ENCODE measurements at regions of chr2 and their contacts with region 1.

Region 1: GRCh38 chr2:236180831-236181453 is 12.8 kb upstream of the GBX2 start:
- H3K4me3 Mint-ChIP-seq: no peak overlapping the region
- H3K27ac Mint-ChIP-seq: no peak overlapping the region
- H3K4me1 Mint-ChIP-seq: peaks cover 8% of the 10 kb centered on the region
- H3K27me3 Mint-ChIP-seq: peaks cover 68% of the 10 kb centered on the region

Region 2: DNA sequence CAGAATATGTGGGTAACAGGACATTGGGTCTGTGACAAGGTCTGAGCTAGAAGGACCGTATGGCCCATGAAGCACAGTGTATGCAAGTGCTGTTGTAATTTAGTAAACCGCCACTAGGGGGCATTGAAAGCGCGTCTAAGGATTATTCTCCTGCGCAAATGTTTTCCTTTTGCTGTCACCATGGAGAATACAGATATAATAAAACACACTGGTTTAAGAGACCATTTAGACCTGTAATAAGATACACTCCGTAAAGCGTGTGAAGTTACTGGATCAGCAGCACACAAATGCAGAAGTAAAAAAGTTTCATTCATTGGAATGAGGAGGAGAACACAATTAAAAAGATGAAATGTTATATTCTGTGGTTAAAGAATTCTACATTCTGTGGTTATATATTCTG is 414.7 kb before region 1 on chr2:
- intact Hi-C with region 1: loop called (anchors 1 kb)
- H3K4me3 Mint-ChIP-seq: no peak overlapping the region
- H3K27ac Mint-ChIP-seq: no peak overlapping the region
- H3K4me1 Mint-ChIP-seq: no peaks in the 10 kb centered on the region
- H3K27me3 Mint-ChIP-seq: peaks cover 3% of the 10 kb centered on the region

Region 3: GRCh38 chr2:235779444-235779896 is 401.5 kb before region 1 on chr2:
- intact Hi-C with region 1: loop called (anchors 1 kb)
- H3K4me3 Mint-ChIP-seq: no peak overlapping the region
- H3K27ac Mint-ChIP-seq: no peak overlapping the region
- H3K4me1 Mint-ChIP-seq: no peaks in the 10 kb centered on the region
- H3K27me3 Mint-ChIP-seq: peaks cover 3% of the 10 kb centered on the region

Region 4: DNA sequence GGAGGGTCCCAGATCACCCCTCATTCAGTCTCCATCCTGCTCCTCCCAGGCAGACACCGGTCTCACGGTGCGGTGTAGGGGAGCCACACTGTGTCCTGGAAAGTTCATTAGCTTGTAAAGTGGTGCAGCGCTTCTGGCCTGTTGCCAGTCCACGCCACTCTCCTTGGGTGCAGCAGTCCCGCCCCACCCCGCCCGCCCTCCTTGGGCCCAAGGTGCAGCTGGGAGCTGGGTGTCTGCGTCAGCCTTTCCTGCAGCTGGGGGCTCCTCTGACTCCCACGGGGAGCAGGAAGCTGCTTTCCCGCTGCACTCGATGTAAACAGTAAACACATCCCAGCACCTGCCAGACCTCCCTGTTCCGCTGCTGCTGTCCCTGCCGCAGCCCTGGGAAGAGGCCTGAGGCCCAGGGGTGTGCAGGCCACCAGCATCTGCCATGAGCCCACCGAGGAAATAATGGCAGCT is 137.0 kb after region 1 on chr2:
- intact Hi-C with region 1: no loop called
- H3K4me3 Mint-ChIP-seq: no peak overlapping the region
- H3K27ac Mint-ChIP-seq: no peak overlapping the region
- H3K4me1 Mint-ChIP-seq: no peaks in the 10 kb centered on the region
- H3K27me3 Mint-ChIP-seq: peaks cover 1% of the 10 kb centered on the region